ENCODE measurements at regions of chr3 and their contacts with region 1.

Region 1: DNA sequence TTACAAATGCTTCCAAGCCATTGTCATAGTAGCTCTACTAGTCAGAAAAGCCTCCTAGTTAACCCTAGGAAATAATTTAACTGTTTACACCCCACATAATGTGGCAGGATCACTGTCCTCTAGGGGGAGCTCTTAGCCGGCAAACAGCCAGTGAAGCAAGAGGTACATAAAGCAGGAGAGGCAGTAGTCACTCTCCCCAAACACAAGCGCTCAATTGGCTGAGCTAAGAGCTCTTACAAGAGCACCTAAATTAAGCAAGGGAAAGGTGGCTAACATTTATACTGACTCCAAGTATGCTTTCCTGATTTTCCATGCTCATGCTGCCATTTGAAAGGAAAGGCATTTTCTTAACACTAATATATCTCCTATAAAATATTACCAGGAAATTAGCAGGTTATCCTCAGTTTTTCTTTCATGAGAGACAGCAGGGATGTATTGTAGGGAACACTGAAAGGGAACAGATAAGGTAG is 37.6 kb downstream of the NCEH1 start:
- DNase-seq: no peak
- H3K4me3 ChIP-seq: no peak overlapping the region
- H3K27ac ChIP-seq: no peak overlapping the region
- H3K27me3 ChIP-seq: no peaks in the 10 kb centered on the region
- CTCF ChIP-seq: peak; percentile 77

Region 2: GRCh38 chr3:172643506-172644179 is 29.6 kb before region 1 on chr3:
- CTCF ChIA-PET with region 1: interaction called, 13 read pairs
- POLR2A ChIA-PET with region 1: interaction called, 3 read pairs
- DNase-seq: no peak
- H3K4me3 ChIP-seq: no peak overlapping the region
- H3K27ac ChIP-seq: no peak overlapping the region
- H3K27me3 ChIP-seq: no peaks in the 10 kb centered on the region
- CTCF ChIP-seq: no peak

Region 3: GRCh38 chr3:172658344-172659245 is 14.7 kb before region 1 on chr3:
- CTCF ChIA-PET with region 1: interaction called, 22 read pairs
- POLR2A ChIA-PET with region 1: interaction called, 3 read pairs
- DNase-seq: peak; percentile 94
- H3K4me3 ChIP-seq: no peak overlapping the region
- H3K27ac ChIP-seq: peak overlapping the region; percentile 84
- H3K27me3 ChIP-seq: no peaks in the 10 kb centered on the region
- CTCF ChIP-seq: no peak

Region 4: DNA sequence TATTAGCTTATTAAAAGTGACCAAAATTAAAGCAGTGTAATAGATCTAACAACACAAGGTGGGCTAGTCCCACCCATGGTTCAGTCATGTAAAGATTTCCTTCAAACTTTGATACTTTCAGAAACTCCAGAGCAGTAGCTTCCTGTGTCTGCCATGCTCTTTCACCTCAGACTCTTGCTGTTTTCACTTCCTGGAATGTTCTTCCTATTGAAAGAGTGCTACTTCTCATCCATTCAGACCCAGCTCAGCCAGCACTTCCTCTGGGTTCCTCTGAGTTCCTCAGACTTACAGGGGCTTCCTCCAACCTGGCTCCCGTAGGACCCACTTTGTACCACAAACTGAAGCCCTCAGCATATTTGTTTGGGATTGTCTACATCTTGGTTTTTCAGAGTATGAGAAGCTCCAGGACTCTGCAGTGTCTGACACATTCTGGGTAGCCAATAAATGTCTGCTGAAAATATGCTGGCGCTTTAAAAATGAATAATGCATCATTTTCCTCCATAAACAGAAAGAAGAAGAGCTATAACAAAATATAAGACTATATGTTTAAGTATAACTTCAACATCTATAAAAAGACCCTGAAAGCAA is 19.6 kb after region 1 on chr3:
- CTCF ChIA-PET with region 1: interaction called, 14 read pairs
- POLR2A ChIA-PET with region 1: no interaction called
- DNase-seq: no peak
- H3K4me3 ChIP-seq: no peak overlapping the region
- H3K27ac ChIP-seq: no peak overlapping the region
- H3K27me3 ChIP-seq: no peaks in the 10 kb centered on the region
- CTCF ChIP-seq: no peak

Region 5: GRCh38 chr3:172710664-172711453 is 37.6 kb after region 1 on chr3 and contains the start of gene NCEH1:
- CTCF ChIA-PET with region 1: interaction called, 10 read pairs
- POLR2A ChIA-PET with region 1: interaction called, 5 read pairs
- DNase-seq: peak; percentile 91
- H3K4me3 ChIP-seq: peak within 1 kb of the TSS; percentile 95
- H3K27ac ChIP-seq: peak within 1 kb of the TSS; percentile 89
- H3K27me3 ChIP-seq: no peaks in the 10 kb centered on the region
- CTCF ChIP-seq: peak; percentile 69
- polyA plus RNA-seq, gene NCEH1: 11.9 and 14.6 TPM in 2 replicates

Region 6: DNA sequence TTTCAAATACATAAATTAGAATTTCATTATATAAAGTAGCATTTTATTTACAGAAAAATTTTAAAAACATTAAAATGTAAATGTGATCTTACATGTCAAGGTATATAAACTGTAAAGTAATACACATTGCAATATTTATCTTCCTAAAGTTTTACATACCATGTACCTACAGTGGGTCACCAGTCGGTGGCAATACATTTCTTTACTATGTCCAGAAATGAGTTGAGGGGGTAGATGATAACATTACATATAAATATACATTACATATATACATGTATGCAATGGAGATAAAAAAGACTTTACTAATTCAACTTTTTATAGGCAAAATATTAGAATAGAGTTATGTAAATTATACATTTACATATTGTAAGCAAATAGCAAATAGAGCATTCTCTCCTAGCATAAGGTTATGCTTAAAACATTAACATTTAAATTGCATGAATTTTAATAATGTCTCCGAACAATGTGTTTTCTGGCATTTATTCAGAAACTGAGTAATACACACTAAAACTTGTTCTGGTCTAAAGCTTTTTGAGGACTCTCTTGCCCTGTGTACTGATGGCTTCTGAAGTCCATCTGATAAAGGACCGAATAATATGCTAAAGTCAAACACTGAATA is 631.0 kb after region 1 on chr3:
- CTCF ChIA-PET with region 1: no interaction called
- POLR2A ChIA-PET with region 1: no interaction called
- DNase-seq: no peak
- H3K4me3 ChIP-seq: no peak overlapping the region
- H3K27ac ChIP-seq: no peak overlapping the region
- H3K27me3 ChIP-seq: no peaks in the 10 kb centered on the region
- CTCF ChIP-seq: no peak